ENCODE measurements at regions of chr20 and their contacts with region 1.

Region 1: GRCh38 chr20:34111702-34112599 is at the start of gene EIF2S2:
- DNase-seq: peak; percentile 99
- ATAC-seq: peak; percentile 91
- H3K4me3 ChIP-seq: peak within 1 kb of the TSS; percentile 63 to 97 (median 90)
- H3K4me3 Mint-ChIP-seq: peak within 1 kb of the TSS; percentile 99
- H3K27ac ChIP-seq: peak within 1 kb of the TSS; percentile 80 to 95
- H3K27ac Mint-ChIP-seq: peak within 1 kb of the TSS; percentile 99
- H3K4me1 ChIP-seq: peaks cover 21 to 28% of the 10 kb centered on the region in 2 donors
- H3K4me1 Mint-ChIP-seq: peaks cover 45% of the 10 kb centered on the region
- H3K27me3 ChIP-seq: no peaks in the 10 kb centered on the region
- H3K27me3 Mint-ChIP-seq: no peaks in the 10 kb centered on the region
- CTCF ChIP-seq: no peak
- total RNA-seq, gene EIF2S2: 26.4 and 27.7 TPM in 2 replicates

Region 2: DNA sequence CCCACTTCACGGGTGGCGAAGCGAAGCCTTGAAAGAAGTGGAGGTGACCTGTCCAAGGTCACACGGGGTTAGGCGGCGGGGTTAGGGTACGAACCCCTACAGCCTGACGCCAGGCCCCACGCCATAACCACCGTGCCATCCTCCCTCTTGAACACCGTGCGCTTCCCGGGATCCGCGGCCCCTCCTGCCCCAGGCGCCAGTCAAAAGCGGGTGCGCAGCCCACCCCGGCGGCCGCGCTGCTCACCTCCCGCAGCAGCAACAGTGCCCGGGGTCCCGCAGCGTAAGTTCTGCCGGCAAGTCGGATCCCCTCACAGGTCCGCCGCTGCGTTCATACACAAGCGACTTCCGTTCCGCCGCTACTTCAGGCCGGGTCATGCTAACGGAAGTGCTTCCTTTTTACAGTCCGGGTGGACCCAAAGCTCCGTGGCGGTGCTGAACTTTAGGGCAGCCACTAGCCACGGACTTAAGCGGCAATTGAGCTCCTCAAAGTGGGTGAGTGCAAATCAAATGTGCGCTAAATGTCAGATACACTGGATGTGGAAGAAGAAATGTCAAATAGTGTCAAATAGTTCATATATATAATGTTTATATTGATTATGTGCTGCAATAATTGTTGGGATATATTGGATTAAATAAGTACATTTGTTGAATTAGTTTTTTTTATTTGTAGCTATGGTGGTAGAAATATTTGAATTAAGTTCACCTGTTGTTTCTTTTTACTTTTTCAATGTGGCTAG is 710.6 kb before region 1 on chr20 and contains the start of gene CDK5RAP1:
- CTCF ChIA-PET with region 1: no interaction called
- POLR2A ChIA-PET with region 1: no interaction called
- intact Hi-C with region 1: loop called (anchors 2 kb)
- DNase-seq: peak; percentile 91
- ATAC-seq: peak; percentile 98
- H3K4me3 ChIP-seq: peak within 1 kb of the TSS; percentile 89 to 99 (median 93)
- H3K4me3 Mint-ChIP-seq: peak within 1 kb of the TSS; percentile 96
- H3K27ac ChIP-seq: peak within 1 kb of the TSS; percentile 14 to 71
- H3K27ac Mint-ChIP-seq: peak within 1 kb of the TSS; percentile 89
- H3K4me1 ChIP-seq: peaks cover 19 to 34% of the 10 kb centered on the region in 2 donors
- H3K4me1 Mint-ChIP-seq: peaks cover 45% of the 10 kb centered on the region
- H3K27me3 ChIP-seq: no peaks in the 10 kb centered on the region
- H3K27me3 Mint-ChIP-seq: no peaks in the 10 kb centered on the region
- CTCF ChIP-seq: no peak
- total RNA-seq, gene CDK5RAP1: 50.4 and 52.6 TPM in 2 replicates

Region 3: DNA sequence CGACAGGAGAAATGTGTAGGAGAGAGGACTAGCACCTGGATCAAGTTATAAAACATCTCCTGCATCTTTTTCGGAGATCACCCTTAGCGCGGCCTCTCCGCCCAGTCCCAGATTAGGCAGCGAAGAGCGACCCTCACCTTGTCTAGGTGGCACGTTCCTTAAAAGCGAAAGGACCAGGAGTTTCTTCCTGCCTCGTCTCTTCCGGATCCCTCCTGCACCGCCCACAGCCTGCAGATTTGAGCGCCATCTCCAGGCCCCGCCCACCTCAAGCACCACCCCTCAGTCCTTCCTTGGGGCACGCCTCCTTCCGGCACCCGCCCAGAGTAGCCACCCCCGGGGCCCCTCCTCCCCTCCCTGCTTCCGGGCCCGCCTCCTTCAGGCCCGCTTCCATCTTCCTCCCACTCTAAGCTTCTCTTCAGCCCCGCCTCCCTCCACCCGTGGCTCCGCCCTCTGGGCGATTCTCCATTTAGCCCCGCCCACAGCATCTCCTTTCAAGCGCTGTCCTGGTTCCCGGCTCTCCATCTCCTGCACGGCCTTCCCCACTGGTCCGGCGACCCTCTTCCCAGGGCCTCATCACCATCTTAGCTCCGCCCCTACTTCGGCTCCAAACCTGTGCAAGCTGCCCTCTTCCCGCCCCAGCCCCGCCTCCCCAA is 118.9 kb before region 1 on chr20:
- CTCF ChIA-PET with region 1: interaction called, 6 read pairs
- POLR2A ChIA-PET with region 1: interaction called, 13 read pairs
- intact Hi-C with region 1: no loop called
- DNase-seq: peak; percentile 99
- ATAC-seq: peak; percentile 84
- H3K4me3 ChIP-seq: peak overlapping the region; percentile 94 to 99 (median 98)
- H3K4me3 Mint-ChIP-seq: peak overlapping the region; percentile 92
- H3K27ac ChIP-seq: peak overlapping the region; percentile 90 to 91
- H3K27ac Mint-ChIP-seq: peak overlapping the region; percentile 99
- H3K4me1 ChIP-seq: peaks cover 40 to 48% of the 10 kb centered on the region in 2 donors
- H3K4me1 Mint-ChIP-seq: peaks cover 59% of the 10 kb centered on the region
- H3K27me3 ChIP-seq: no peaks in the 10 kb centered on the region
- H3K27me3 Mint-ChIP-seq: no peaks in the 10 kb centered on the region
- CTCF ChIP-seq: no peak

Measured in B cell (primary cell).